HEK293 (cell line): ENCODE measurements at regions of chr2 and their contacts with region 1.

Region 1: GRCh38 chr2:202178342-202178958 is 59.9 kb downstream of the SUMO1 start:
- H3K4me3 ChIP-seq: no peak overlapping the region
- H3K27ac ChIP-seq: no peak overlapping the region
- H3K4me1 ChIP-seq: no peaks in the 10 kb centered on the region
- CTCF ChIP-seq: 0 out of 2 replicates have a peak, but pooled peaks have one; percentile 34

Region 2: DNA sequence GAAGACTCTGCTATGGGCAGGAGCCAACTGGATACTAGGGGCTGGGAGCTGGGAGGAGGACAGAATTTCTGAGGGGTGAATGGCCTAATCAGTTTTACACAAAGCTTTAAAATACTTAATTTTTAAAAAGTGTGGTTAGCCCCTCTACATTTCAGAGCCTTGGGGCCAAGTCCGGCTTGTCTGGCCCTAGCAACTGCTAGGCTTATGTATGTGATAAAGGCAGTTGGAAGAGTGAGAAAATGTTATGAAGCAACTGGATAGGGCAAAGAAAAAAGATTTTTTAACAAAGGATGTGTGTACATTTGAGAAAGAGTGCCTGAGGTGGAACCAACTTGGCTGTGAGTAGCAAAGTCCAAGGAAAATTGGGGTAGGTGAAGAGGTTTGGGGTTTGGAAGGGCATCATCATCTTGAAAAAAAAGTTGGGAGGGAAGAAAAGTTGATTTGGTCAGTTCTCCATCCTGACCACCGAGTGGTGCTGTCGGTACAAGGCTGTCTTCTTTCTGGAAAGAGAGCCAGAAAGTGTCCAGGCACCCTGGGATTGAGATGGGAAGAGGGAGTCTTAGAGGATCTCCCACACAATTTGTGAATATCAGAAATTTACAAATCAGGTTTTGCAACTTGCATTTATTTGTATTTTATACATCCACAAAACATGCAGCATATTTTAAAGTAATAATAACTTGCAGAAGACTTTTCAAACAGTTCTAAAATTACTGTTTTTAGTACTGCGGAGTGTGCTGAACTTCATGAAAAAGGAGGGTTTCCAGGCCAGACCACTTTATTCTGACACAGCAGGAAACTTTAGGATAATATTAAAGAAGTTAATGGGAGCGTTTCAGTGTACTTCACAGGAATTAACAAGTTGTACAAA is 382.6 kb before region 1 on chr2:
- CTCF ChIA-PET with region 1: interaction called, 13 read pairs
- POLR2A ChIA-PET with region 1: no interaction called
- H3K4me3 ChIP-seq: no peak overlapping the region
- H3K27ac ChIP-seq: no peak overlapping the region
- H3K4me1 ChIP-seq: no peaks in the 10 kb centered on the region
- CTCF ChIP-seq: peak; percentile 81

Region 3: GRCh38 chr2:201866643-201867473 is 311.6 kb before region 1 on chr2:
- CTCF ChIA-PET with region 1: interaction called, 11 read pairs
- POLR2A ChIA-PET with region 1: interaction called, 4 read pairs
- H3K4me3 ChIP-seq: no peak overlapping the region
- H3K27ac ChIP-seq: no peak overlapping the region
- H3K4me1 ChIP-seq: 0 out of 2 replicates have a peak, but pooled peaks cover 3% of the 10 kb centered on the region
- CTCF ChIP-seq: no peak

Region 4: DNA sequence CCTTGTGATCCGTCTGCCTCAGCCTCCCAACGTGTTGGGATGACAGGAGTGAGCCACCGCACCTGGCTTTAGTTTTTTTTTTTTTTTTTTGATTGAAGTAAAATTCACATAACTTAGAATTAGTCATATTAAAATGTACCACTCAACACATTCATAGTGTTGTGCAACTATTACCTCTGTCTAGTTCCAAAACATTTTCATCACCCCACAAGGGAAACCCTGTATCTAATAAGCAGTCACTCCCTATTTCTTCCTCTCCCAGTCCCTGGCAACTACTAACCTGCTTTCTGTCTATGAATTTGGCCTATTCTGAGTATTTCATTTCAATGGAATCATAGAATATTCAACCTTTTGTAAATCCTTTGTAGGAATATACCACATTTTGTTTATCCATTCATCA is 332.5 kb after region 1 on chr2:
- CTCF ChIA-PET with region 1: no interaction called
- POLR2A ChIA-PET with region 1: no interaction called
- H3K4me3 ChIP-seq: no peak overlapping the region
- H3K27ac ChIP-seq: no peak overlapping the region
- H3K4me1 ChIP-seq: no peaks in the 10 kb centered on the region
- CTCF ChIP-seq: no peak